Caco-2 (cell line): ENCODE measurements at regions of chr2 and their contacts with region 1.

Region 1: DNA sequence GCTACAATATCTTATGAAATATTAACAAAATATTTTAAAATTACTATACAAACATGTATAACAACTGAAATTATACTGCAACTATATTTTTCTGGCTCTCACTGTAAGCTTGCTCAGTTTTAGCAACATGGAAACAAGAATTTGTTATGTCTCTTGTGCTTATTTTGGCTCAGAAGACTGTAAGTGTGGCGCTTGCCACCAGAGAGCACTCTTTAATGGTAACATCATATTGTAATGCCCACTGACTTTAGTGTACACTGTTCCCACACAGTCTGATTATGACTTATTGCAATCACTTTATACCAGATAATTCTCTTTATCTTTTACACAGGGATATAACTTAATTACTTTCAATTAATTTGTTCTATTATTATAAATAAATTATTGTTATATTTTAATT is 1500.6 kb upstream of the TMEFF2 start:
- DNase-seq: peak in 1 of 2 experiments; percentile 11
- H3K4me3 ChIP-seq: no peak overlapping the region
- H3K4me3 Mint-ChIP-seq: no peak overlapping the region
- H3K27ac Mint-ChIP-seq: no peak overlapping the region
- H3K4me1 ChIP-seq: no peaks in the 10 kb centered on the region
- H3K4me1 Mint-ChIP-seq: no peaks in the 10 kb centered on the region
- H3K27me3 ChIP-seq: no peaks in the 10 kb centered on the region
- H3K27me3 Mint-ChIP-seq: peaks cover 2% of the 10 kb centered on the region
- CTCF ChIP-seq: peak; percentile 19 to 52

Region 2: DNA sequence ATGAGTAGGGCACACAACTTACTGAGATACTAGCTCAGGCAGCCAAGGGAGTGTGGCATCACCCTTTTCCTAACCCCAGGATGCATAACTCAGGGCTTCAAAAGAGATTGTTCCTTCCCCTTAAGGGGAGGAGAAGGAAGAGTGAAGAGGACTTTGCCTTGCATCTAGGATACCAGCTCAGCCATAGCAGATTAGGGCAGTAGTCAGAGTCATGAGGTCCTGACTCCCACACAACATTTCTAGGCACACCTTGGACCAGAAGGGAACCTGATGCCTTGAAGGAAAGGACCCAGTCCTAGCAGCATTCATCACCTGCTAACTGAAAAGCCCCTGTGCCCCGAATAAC is 67.5 kb before region 1 on chr2:
- CTCF ChIA-PET with region 1: no interaction called
- POLR2A ChIA-PET with region 1: no interaction called
- intact Hi-C with region 1: no loop called
- DNase-seq: no peak
- H3K4me3 ChIP-seq: no peak overlapping the region
- H3K4me3 Mint-ChIP-seq: no peak overlapping the region
- H3K27ac Mint-ChIP-seq: no peak overlapping the region
- H3K4me1 ChIP-seq: peaks cover 13% of the 10 kb centered on the region
- H3K4me1 Mint-ChIP-seq: peaks cover 15% of the 10 kb centered on the region
- H3K27me3 ChIP-seq: no peaks in the 10 kb centered on the region
- H3K27me3 Mint-ChIP-seq: no peaks in the 10 kb centered on the region
- CTCF ChIP-seq: no peak

Region 3: GRCh38 chr2:193679850-193680249 is 15.5 kb before region 1 on chr2:
- CTCF ChIA-PET with region 1: no interaction called
- POLR2A ChIA-PET with region 1: no interaction called
- intact Hi-C with region 1: no loop called
- DNase-seq: no peak
- H3K4me3 ChIP-seq: no peak overlapping the region
- H3K4me3 Mint-ChIP-seq: no peak overlapping the region
- H3K27ac Mint-ChIP-seq: no peak overlapping the region
- H3K4me1 ChIP-seq: no peaks in the 10 kb centered on the region
- H3K4me1 Mint-ChIP-seq: no peaks in the 10 kb centered on the region
- H3K27me3 ChIP-seq: no peaks in the 10 kb centered on the region
- H3K27me3 Mint-ChIP-seq: no peaks in the 10 kb centered on the region
- CTCF ChIP-seq: no peak

Region 4: GRCh38 chr2:193885175-193885818 is 189.9 kb after region 1 on chr2:
- CTCF ChIA-PET with region 1: no interaction called
- POLR2A ChIA-PET with region 1: no interaction called
- intact Hi-C with region 1: loop called (anchors 1 kb)
- DNase-seq: no peak
- H3K4me3 ChIP-seq: no peak overlapping the region
- H3K4me3 Mint-ChIP-seq: no peak overlapping the region
- H3K27ac Mint-ChIP-seq: no peak overlapping the region
- H3K4me1 ChIP-seq: no peaks in the 10 kb centered on the region; the same call in 1 of the 2 replicates
- H3K4me1 Mint-ChIP-seq: no peaks in the 10 kb centered on the region
- H3K27me3 ChIP-seq: no peaks in the 10 kb centered on the region
- H3K27me3 Mint-ChIP-seq: no peaks in the 10 kb centered on the region
- CTCF ChIP-seq: no peak

Region 5: GRCh38 chr2:193963472-193964119 is 268.2 kb after region 1 on chr2:
- CTCF ChIA-PET with region 1: no interaction called
- POLR2A ChIA-PET with region 1: no interaction called
- intact Hi-C with region 1: loop called (anchors 1 kb)
- DNase-seq: peak in 1 of 2 experiments; percentile 54
- H3K4me3 ChIP-seq: no peak overlapping the region
- H3K4me3 Mint-ChIP-seq: no peak overlapping the region
- H3K27ac Mint-ChIP-seq: no peak overlapping the region
- H3K4me1 ChIP-seq: 0 out of 2 replicates have a peak, but pooled peaks cover 4% of the 10 kb centered on the region
- H3K4me1 Mint-ChIP-seq: no peaks in the 10 kb centered on the region
- H3K27me3 ChIP-seq: no peaks in the 10 kb centered on the region
- H3K27me3 Mint-ChIP-seq: no peaks in the 10 kb centered on the region
- CTCF ChIP-seq: peak; percentile 62 to 68